Left ventricle myocardium inferior (tissue), 1 donor: ENCODE measurements at regions of chr21 and their contacts with region 1.

Region 1: DNA sequence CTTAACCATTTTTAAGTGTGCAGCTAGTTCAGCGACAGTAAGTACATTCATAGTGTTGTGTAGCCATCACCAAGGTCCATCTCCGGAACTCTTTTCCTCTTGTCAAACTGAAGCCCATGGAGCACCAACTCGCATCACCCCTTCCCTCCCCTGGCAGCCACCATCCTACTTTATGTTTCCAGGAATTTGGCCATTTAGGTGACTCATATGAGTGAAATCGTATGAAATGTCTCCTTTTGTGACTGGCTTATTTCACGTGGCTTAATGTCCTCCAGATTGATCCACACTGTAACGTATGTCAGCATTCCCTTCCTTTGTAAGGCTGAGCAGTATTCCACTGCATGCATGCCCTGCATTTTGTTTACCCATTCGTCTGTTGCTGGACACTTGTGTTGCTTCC is 2.5 kb downstream of the COL6A2 start:
- DNase-seq: no peak
- H3K4me3 ChIP-seq: peak overlapping the region; percentile 85
- H3K27ac ChIP-seq: peak overlapping the region; percentile 92
- H3K4me1 ChIP-seq: peaks cover 48% of the 10 kb centered on the region
- H3K27me3 ChIP-seq: peaks cover 15% of the 10 kb centered on the region
- CTCF ChIP-seq: no peak

Region 2: DNA sequence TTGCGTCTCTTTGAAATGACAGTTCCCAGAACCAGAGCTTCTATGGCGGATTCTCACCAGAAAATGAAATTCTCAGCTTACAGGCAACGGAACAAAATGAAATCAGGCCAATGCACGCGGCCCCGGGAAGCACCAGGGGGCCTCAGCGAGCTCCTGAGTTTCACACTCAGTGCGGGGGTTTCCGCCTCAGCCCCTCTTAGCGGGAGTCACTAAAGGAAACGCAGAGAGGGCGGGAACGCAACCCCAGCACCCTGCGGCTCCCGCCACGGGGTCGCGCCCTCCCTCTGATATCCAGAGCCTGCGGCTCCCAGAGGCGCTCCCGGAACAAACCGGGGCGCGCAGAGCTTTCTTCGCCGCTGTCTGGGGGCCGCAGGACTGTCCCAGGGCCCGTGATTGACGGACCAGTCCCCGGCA is 126.8 kb before region 1 on chr21:
- intact Hi-C with region 1: loop called (anchors 10 kb)
- DNase-seq: peak; percentile 87
- H3K4me3 ChIP-seq: peak overlapping the region; percentile 69
- H3K27ac ChIP-seq: peak overlapping the region; percentile 97
- H3K4me1 ChIP-seq: peaks cover 72% of the 10 kb centered on the region
- H3K27me3 ChIP-seq: no peaks in the 10 kb centered on the region
- CTCF ChIP-seq: peak; percentile 81